ENCODE measurements at regions of chr21 and their contacts with region 1.

Region 1: GRCh38 chr21:37232274-37233018 is 34.7 kb downstream of the VPS26C start:
- DNase-seq: peak; percentile 75
- CTCF ChIP-seq: no peak

Region 2: DNA sequence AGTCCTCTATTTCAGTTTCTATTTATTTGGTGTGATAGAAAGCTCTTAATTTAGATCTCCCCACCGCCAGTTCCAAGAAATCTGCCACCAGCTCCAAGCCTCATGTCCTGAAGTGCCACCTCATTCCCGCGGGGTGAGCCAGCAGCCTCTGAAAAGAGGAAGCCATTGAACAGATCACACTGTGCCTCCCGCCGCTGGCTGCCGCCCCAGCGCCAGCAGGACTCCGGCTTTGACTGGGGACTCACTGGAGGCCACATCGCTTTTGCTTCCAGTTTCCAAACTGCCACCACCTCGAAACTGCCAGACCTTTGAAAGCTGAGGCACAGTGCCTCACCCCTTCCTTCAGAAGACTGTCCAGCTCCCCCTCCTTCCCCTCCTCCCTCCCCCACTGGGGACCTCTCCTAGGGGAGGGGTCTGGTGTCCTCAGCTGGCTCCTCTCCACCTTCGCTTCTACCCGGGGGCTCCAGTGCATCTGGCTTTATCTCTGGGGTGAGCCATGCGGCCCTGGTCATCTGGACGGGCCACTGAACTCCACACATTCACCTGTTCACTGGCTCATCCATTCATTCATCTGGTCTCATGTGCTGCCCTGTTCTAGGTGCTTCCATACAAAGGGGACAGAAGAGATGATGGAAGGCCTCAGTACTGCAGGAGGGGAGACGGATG is 24.3 kb before region 1 on chr21:
- CTCF ChIA-PET with region 1: interaction called, 12 read pairs
- POLR2A ChIA-PET with region 1: no interaction called
- DNase-seq: peak; percentile 85
- CTCF ChIP-seq: no peak

Region 3: DNA sequence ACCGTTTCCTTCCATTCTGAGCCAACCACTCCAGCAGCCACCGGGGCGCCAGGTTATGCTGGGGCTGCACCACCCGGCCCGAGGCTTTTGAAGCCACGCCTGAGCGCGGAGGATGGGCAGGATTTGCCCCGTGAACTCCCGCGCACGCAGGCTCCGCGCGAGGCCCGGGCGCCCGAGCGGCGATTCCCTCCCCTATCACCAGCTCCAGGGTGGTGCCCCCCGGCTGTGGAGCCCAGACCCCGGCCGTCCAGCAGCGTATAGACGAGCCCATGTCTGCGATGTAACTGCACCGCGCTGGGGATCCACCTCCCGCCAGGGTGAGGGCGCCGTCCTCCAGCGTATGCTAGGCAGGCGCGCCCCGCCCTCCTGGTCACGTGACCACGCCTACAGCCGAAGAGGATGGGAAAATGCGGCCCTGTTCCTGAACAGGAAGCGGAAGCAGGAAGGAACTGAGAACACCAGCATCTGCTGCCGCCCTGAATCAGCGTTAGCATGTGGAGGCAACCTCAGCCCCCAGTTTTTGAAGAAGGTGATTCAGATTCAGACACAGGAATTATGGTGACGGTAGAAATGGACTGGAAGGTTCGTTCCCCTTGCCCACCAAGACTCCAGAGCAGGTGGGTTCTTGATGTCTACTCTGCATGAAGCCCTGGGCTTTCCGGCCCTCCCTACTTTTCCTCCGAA is 11.3 kb before region 1 on chr21:
- CTCF ChIA-PET with region 1: interaction called, 13 read pairs
- POLR2A ChIA-PET with region 1: no interaction called
- DNase-seq: peak; percentile 91
- CTCF ChIP-seq: peak; percentile 85